MCF 10A (cell line): ENCODE measurements at regions of chr12 and their contacts with region 1.

Region 1: DNA sequence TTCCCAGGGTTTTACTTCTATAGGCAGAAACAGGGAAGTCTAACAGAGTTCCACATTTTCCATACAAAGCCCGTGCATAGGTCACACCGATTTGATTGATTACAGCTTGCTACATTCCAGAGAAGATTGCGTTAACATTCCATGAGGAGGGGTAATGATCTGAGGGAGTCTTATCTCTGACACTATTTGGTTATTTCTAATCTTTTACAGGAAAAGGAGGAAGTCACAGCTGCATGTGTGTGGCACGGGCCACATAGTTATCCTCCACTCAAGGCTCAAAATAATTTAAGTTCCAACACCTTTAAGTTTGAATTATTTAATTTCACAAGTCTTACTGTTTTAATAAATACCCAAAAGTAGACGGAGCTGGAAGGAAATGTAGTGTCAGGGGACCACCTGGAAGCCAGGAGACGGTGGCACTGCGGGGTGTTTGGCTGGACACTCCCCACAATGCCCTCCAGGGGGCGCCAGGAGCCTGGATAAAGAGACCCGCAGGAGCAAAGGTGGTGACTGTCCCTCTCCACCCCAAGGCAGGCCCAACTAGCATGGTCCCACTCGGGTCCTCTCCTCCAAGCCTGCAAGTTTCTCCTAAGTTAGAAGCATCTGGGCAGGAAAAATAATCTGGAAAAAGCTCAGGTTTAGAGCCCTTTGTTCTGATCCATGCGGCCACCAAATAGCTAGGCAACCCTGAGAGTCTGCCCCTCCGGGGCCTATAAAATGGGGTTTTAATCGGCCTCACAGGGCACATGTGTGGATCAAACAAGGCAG is 20.2 kb downstream of the KRT8 start:
- DNase-seq: peak; percentile 77
- H3K4me3 Mint-ChIP-seq: no peak overlapping the region
- H3K27ac Mint-ChIP-seq: no peak overlapping the region
- H3K4me1 Mint-ChIP-seq: peaks cover 4% of the 10 kb centered on the region
- H3K27me3 Mint-ChIP-seq: no peaks in the 10 kb centered on the region
- CTCF ChIP-seq: peak; percentile 93

Region 2: DNA sequence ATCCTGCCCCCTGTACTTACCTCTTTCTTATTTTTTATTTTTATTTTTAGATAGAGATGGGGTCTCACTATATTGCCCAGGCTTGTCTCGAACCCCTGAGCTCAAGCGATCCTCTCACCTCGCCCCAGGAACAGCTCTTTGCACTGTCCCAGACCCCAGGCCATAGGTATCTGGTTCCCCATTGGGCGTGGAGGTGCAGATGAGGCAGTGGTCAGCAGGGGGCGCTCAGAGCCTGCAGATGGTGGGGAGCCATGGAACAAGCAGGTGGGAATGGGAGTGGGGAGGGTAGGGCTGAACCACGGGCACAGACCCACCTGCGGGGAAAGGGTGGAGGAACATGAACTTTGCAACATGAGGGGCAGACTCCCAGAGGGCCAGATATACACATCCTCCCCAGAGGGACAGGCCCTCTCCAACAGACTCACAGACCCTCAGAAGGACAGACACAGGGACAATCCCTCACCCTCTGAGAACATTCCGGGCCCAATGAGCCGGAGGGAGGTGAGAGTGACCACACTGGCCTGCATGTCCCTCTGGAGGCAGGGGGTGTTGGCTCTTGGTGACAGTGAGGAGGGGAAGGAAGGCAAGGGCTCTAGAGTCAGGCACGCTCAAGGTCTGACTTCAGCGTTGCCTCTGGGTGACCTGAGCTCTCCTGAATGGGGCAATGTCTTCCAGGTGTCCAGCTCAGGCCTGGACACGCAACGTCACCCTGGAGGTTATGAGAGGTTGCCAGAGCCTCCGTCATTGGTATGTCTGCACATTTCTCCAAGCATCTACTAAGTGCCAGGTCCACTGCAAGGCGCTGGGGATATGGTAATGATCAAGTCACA is 727.8 kb before region 1 on chr12:
- CTCF ChIA-PET with region 1: interaction called, 313 read pairs
- POLR2A ChIA-PET with region 1: interaction called, 142 read pairs
- intact Hi-C with region 1: loop called (anchors 1 kb)
- DNase-seq: peak; percentile 85
- H3K4me3 Mint-ChIP-seq: no peak overlapping the region
- H3K27ac Mint-ChIP-seq: peak overlapping the region; percentile 91
- H3K4me1 Mint-ChIP-seq: peaks cover 30% of the 10 kb centered on the region
- H3K27me3 Mint-ChIP-seq: no peaks in the 10 kb centered on the region
- CTCF ChIP-seq: peak; percentile 98

Region 3: GRCh38 chr12:52522346-52523011 is 362.2 kb before region 1 on chr12:
- CTCF ChIA-PET with region 1: interaction called, 77 read pairs
- POLR2A ChIA-PET with region 1: interaction called, 675 read pairs
- intact Hi-C with region 1: no loop called
- DNase-seq: peak; percentile 98
- H3K4me3 Mint-ChIP-seq: peak overlapping the region; percentile 80
- H3K27ac Mint-ChIP-seq: peak overlapping the region; percentile 96
- H3K4me1 Mint-ChIP-seq: peaks cover 44% of the 10 kb centered on the region
- H3K27me3 Mint-ChIP-seq: no peaks in the 10 kb centered on the region
- CTCF ChIP-seq: no peak

Region 4: GRCh38 chr12:52903285-52903854 is 18.7 kb after region 1 on chr12:
- CTCF ChIA-PET with region 1: interaction called, 107 read pairs
- POLR2A ChIA-PET with region 1: interaction called, 7 read pairs
- intact Hi-C with region 1: no loop called
- DNase-seq: peak; percentile 87
- H3K4me3 Mint-ChIP-seq: peak overlapping the region; percentile 76
- H3K27ac Mint-ChIP-seq: peak overlapping the region; percentile 82
- H3K4me1 Mint-ChIP-seq: peaks cover 28% of the 10 kb centered on the region
- H3K27me3 Mint-ChIP-seq: no peaks in the 10 kb centered on the region
- CTCF ChIP-seq: no peak

Region 5: DNA sequence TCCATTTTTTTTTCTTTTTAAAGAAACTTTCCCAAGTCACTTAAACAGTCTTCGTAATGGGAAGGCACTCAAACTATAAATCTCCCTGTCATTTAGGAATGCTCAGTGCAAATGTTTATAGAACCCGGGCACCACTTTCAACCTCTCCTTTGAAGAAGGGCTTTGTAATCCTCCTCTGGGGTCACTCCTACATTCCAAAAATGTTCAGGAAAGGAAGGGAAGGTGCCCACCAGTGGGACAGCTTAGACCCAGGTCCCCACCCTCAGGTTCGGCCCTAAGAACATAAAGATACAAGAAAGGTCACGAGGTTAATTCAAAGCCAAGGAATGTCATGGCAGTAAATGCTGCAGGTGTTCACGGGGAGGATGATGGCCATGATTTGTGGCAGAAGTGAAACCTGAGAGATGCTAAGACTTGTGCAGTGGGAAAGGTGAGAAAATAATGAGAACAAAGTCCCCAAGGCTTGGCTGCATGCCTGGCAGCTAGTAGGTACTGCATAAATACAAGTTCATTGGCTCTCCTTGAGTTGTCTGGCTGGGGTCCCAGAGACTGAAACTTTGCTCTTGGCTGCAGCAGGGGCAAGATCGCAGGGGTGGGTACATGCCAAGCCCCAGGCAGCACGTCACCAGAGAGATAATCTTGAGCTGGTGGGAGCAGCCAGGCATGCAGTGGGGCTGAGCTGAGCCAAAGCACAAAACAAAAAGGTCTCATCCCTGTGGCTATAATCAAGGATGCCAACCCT is 85.3 kb after region 1 on chr12:
- CTCF ChIA-PET with region 1: interaction called, 32 read pairs
- POLR2A ChIA-PET with region 1: interaction called, 7 read pairs
- intact Hi-C with region 1: no loop called
- DNase-seq: peak; percentile 60
- H3K4me3 Mint-ChIP-seq: no peak overlapping the region
- H3K27ac Mint-ChIP-seq: peak overlapping the region; percentile 39
- H3K4me1 Mint-ChIP-seq: peaks cover 23% of the 10 kb centered on the region
- H3K27me3 Mint-ChIP-seq: no peaks in the 10 kb centered on the region
- CTCF ChIP-seq: no peak